B cell (primary cell): ENCODE measurements at regions of chr6 and their contacts with region 1.

Region 1: DNA sequence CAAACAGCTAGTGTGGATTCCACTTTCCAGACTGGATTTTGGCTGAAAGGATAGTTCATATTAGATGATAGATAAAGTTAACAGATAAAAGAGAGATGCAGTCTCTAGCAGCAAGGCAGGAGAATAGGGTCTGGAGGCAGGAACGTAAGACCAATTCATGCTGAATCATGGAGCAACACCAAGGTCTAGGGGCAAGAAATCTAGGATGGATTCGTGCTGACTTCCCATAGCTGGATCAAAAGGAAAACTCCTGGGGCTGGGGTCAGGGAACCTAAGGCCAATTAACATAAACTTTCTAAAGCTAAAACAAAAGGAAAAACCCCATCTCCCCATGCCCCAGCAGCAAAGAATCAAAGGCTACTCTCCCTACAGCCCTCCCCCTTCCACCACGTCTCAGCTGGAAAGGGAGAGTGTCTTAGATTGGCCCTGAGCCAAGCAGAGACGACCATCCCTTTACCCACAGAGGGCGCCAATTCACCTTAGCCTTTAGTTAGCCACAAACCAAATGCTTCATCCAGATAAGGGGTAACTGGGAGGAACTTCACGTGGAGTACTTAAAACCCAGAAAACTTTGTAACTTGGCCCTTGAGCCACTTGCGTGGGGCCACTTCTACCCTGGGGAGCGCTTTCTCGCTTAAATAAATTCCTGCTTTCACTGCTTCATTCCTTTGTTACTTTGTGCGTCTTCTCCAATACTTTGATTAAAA is 7.6 kb downstream of the TREM1 start:
- DNase-seq: peak; percentile 84
- ATAC-seq: peak; percentile 66
- H3K4me3 ChIP-seq: no peak overlapping the region
- H3K4me3 Mint-ChIP-seq: peak overlapping the region; percentile 21
- H3K27ac ChIP-seq: no peak overlapping the region
- H3K27ac Mint-ChIP-seq: peak overlapping the region; percentile 35
- H3K4me1 ChIP-seq: peaks cover 29 to 44% of the 10 kb centered on the region in 2 donors
- H3K4me1 Mint-ChIP-seq: peaks cover 43% of the 10 kb centered on the region
- H3K27me3 ChIP-seq: no peaks in the 10 kb centered on the region
- H3K27me3 Mint-ChIP-seq: peaks cover 5% of the 10 kb centered on the region
- CTCF ChIP-seq: peak; percentile 79

Region 2: GRCh38 chr6:41182069-41183034 is 96.5 kb before region 1 on chr6:
- CTCF ChIA-PET with region 1: interaction called, 11 read pairs
- POLR2A ChIA-PET with region 1: no interaction called
- intact Hi-C with region 1: no loop called
- DNase-seq: peak; percentile 66
- ATAC-seq: peak; percentile 71
- H3K4me3 ChIP-seq: no peak overlapping the region
- H3K4me3 Mint-ChIP-seq: peak overlapping the region; percentile 35
- H3K27ac ChIP-seq: peak overlapping the region; percentile 70 to 74
- H3K27ac Mint-ChIP-seq: peak overlapping the region; percentile 75
- H3K4me1 ChIP-seq: peaks cover 48 to 50% of the 10 kb centered on the region in 2 donors
- H3K4me1 Mint-ChIP-seq: peaks cover 54% of the 10 kb centered on the region
- H3K27me3 ChIP-seq: no peaks in the 10 kb centered on the region
- H3K27me3 Mint-ChIP-seq: peaks cover 3% of the 10 kb centered on the region
- CTCF ChIP-seq: peak; percentile 72

Region 3: GRCh38 chr6:41298785-41299502 is 20.1 kb after region 1 on chr6:
- CTCF ChIA-PET with region 1: interaction called, 10 read pairs
- POLR2A ChIA-PET with region 1: no interaction called
- intact Hi-C with region 1: loop called (anchors 1 kb)
- DNase-seq: peak; percentile 64
- ATAC-seq: peak; percentile 66
- H3K4me3 ChIP-seq: peak overlapping the region in 3 of 5 experiments; percentile 3 to 48 (median 34)
- H3K4me3 Mint-ChIP-seq: peak overlapping the region; percentile 38
- H3K27ac ChIP-seq: peak overlapping the region; percentile 60 to 81
- H3K27ac Mint-ChIP-seq: peak overlapping the region; percentile 84
- H3K4me1 ChIP-seq: peaks cover 25 to 32% of the 10 kb centered on the region in 2 donors
- H3K4me1 Mint-ChIP-seq: peaks cover 54% of the 10 kb centered on the region
- H3K27me3 ChIP-seq: no peaks in the 10 kb centered on the region
- H3K27me3 Mint-ChIP-seq: no peaks in the 10 kb centered on the region
- CTCF ChIP-seq: no peak

Region 4: GRCh38 chr6:41318654-41319565 is 40.1 kb after region 1 on chr6:
- CTCF ChIA-PET with region 1: interaction called, 46 read pairs
- POLR2A ChIA-PET with region 1: interaction called, 5 read pairs
- intact Hi-C with region 1: loop called (anchors 1 kb)
- DNase-seq: peak; percentile 92
- ATAC-seq: peak; percentile 99
- H3K4me3 ChIP-seq: peak overlapping the region; percentile 16 to 54 (median 46)
- H3K4me3 Mint-ChIP-seq: peak overlapping the region; percentile 88
- H3K27ac ChIP-seq: peak overlapping the region; percentile 39 to 55
- H3K27ac Mint-ChIP-seq: peak overlapping the region; percentile 91
- H3K4me1 ChIP-seq: peaks cover 47 to 48% of the 10 kb centered on the region in 2 donors
- H3K4me1 Mint-ChIP-seq: peaks cover 34% of the 10 kb centered on the region
- H3K27me3 ChIP-seq: no peaks in the 10 kb centered on the region
- H3K27me3 Mint-ChIP-seq: no peaks in the 10 kb centered on the region
- CTCF ChIP-seq: peak; percentile 100

Region 5: GRCh38 chr6:41375598-41376151 is 96.8 kb after region 1 on chr6:
- CTCF ChIA-PET with region 1: no interaction called
- POLR2A ChIA-PET with region 1: no interaction called
- intact Hi-C with region 1: no loop called
- DNase-seq: peak; percentile 29
- ATAC-seq: no peak
- H3K4me3 ChIP-seq: no peak overlapping the region
- H3K4me3 Mint-ChIP-seq: peak overlapping the region; percentile 71
- H3K27ac ChIP-seq: no peak overlapping the region
- H3K27ac Mint-ChIP-seq: no peak overlapping the region
- H3K4me1 ChIP-seq: peaks cover 42 to 46% of the 10 kb centered on the region in 2 donors
- H3K4me1 Mint-ChIP-seq: peaks cover 44% of the 10 kb centered on the region
- H3K27me3 ChIP-seq: peaks cover 0 to 79% (median 52%) of the 10 kb centered on the region in 4 experiments
- H3K27me3 Mint-ChIP-seq: peaks cover 75% of the 10 kb centered on the region
- CTCF ChIP-seq: no peak

Region 6: DNA sequence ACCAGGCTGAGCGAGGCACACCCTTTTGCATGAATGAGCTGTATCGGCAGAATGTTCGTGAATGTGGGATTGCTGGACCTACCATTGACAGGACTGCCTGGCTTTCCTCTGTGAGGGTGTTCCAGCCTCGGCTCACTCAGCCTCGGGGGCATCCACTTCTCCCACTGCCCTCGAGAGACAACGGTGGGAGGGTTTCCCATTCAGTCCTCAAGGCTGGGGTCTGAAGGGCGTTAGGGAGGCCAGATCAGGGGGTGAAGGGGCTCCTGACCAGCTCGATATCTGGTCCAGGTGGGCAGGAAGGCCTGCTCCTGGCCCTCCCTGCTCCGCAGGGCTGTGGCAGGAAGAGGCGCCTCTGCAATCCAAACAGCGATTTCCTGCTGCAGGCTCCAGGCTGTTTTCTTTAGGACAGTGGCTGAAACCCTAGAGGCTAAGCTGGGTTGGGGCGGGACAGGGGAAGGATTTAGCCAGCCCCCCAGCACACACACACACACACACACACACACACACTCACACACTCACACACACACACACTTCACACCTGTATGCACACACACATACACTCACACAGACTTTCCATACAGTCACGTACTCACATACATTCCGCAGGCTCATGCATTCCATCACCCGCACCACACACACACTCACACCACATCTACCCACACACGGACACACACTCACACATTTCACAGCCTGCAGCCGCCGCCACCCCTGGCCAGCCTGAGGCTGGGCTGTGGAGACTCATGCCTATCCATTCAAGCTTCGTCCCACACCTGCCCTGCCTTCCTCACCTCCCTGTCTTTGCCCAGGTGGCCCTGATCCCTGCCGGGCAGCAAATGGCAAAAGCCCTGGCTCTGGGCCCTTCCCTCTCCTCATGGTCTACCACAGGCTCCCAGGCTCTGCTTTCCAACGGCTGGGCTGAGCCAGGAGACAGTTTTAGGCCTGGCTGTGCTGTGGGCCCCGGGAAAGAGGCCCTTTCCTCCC is 377.1 kb after region 1 on chr6:
- CTCF ChIA-PET with region 1: no interaction called
- POLR2A ChIA-PET with region 1: no interaction called
- intact Hi-C with region 1: no loop called
- DNase-seq: no peak
- ATAC-seq: no peak
- H3K4me3 ChIP-seq: no peak overlapping the region
- H3K4me3 Mint-ChIP-seq: no peak overlapping the region
- H3K27ac ChIP-seq: no peak overlapping the region
- H3K27ac Mint-ChIP-seq: no peak overlapping the region
- H3K4me1 ChIP-seq: no peaks in the 10 kb centered on the region
- H3K4me1 Mint-ChIP-seq: no peaks in the 10 kb centered on the region
- H3K27me3 ChIP-seq: peaks cover 0 to 23% (median 4%) of the 10 kb centered on the region in 4 experiments
- H3K27me3 Mint-ChIP-seq: peaks cover 48% of the 10 kb centered on the region
- CTCF ChIP-seq: no peak